IMR-90 (cell line): ENCODE measurements at regions of chr2 and their contacts with region 1.

Region 1: GRCh38 chr2:64330281-64331113 is 123.5 kb upstream of the LGALSL start:
- DNase-seq: peak; percentile 88
- ATAC-seq: peak; percentile 82
- H3K4me3 ChIP-seq: peak overlapping the region; percentile 43
- H3K27ac ChIP-seq: no peak overlapping the region
- H3K4me1 ChIP-seq: peaks cover 6% of the 10 kb centered on the region; the same call in 1 of the 2 replicates
- H3K27me3 ChIP-seq: peaks cover 11% of the 10 kb centered on the region
- CTCF ChIP-seq: peak; percentile 93
- POLR2A ChIP-seq: no peak
- RAD21 ChIP-seq: peak; percentile 92

Region 2: GRCh38 chr2:63983986-63984605 is 346.4 kb before region 1 on chr2:
- CTCF ChIA-PET with region 1: no interaction called
- POLR2A ChIA-PET with region 1: no interaction called
- dilution Hi-C with region 1: no loop called
- in situ Hi-C with region 1: no loop called
- intact Hi-C with region 1: no loop called
- DNase-seq: peak; percentile 9
- ATAC-seq: no peak
- H3K4me3 ChIP-seq: no peak overlapping the region
- H3K27ac ChIP-seq: no peak overlapping the region
- H3K4me1 ChIP-seq: no peaks in the 10 kb centered on the region
- H3K27me3 ChIP-seq: no peaks in the 10 kb centered on the region
- CTCF ChIP-seq: no peak
- POLR2A ChIP-seq: no peak
- RAD21 ChIP-seq: no peak

Region 3: DNA sequence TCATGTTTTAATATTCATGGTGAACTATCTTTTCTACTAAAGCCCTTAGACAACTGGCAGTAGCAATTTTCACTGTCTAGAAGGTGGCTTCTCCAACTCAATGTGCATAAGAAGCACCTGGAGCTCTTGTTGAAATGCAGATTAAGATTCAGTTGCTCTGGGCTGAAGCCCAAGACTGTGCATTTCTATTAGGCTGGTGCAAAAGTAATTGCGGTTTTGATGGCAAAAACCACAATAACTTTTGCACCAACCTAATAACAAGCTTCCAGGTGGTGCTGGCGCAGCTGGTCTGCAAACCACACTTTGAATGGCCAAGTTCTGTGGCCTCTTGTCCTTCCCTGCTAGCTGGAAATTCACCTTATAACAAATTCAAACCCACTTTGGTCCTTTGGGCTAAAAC is 284.6 kb before region 1 on chr2:
- CTCF ChIA-PET with region 1: interaction called, 11 read pairs
- POLR2A ChIA-PET with region 1: no interaction called
- dilution Hi-C with region 1: no loop called
- in situ Hi-C with region 1: loop called (anchors 5 kb)
- intact Hi-C with region 1: loop called (anchors 1 kb)
- DNase-seq: no peak
- ATAC-seq: no peak
- H3K4me3 ChIP-seq: no peak overlapping the region
- H3K27ac ChIP-seq: no peak overlapping the region
- H3K4me1 ChIP-seq: no peaks in the 10 kb centered on the region
- H3K27me3 ChIP-seq: peaks cover 4% of the 10 kb centered on the region; the same call in 1 of the 2 replicates
- CTCF ChIP-seq: no peak
- POLR2A ChIP-seq: no peak
- RAD21 ChIP-seq: no peak

Region 4: DNA sequence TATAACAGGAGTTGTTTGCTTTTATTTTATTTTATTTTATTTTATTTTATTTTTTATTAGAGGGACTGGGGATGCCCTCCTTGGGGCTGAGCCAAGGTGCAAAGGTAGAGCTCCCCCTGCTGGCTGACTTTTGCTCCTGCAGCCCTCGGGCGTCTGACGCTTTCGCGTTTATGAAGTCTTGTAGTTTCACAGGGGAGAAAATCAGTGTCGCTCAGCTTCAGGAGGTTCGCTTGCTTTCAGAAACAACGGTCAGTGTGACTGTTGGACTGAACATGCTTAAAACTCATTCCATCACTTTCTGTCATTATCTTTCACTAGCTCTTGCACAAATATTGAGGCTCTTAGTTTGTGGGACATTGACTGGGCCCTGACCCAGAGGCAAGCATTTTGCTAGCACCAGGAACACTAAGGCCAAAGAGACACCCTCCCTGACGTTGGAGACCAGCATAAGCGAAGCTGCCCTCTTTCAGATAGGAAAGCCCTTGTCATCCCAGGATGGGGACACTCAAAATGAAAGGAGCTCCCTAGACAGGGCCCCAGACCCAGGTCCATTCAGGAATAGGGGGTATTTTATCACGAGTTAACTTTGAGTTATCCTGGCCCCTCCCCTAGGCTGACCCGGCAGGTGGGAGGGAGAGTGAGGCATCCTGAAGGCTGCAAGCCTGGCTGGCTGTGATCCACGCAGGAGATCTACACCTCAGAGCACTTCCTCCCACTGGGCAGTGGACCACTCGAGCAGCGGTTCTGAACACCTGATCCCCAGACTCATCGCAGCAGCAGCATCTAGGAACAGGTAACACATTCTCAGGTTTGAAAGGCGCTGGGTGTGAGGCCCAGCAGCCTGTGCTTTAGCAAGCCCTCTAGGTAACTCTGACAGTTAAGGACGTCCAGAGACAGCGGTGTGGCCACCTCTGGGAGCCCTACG is 157.8 kb after region 1 on chr2:
- CTCF ChIA-PET with region 1: interaction called, 36 read pairs
- POLR2A ChIA-PET with region 1: no interaction called
- dilution Hi-C with region 1: no loop called
- in situ Hi-C with region 1: loop called (anchors 5 kb)
- intact Hi-C with region 1: loop called (anchors 1 kb)
- DNase-seq: peak; percentile 42
- ATAC-seq: peak; percentile 87
- H3K4me3 ChIP-seq: no peak overlapping the region
- H3K27ac ChIP-seq: no peak overlapping the region
- H3K4me1 ChIP-seq: peaks cover 2% of the 10 kb centered on the region; the same call in 1 of the 2 replicates
- H3K27me3 ChIP-seq: peaks cover 49% of the 10 kb centered on the region
- CTCF ChIP-seq: peak; percentile 86
- POLR2A ChIP-seq: no peak
- RAD21 ChIP-seq: peak; percentile 73

Region 5: DNA sequence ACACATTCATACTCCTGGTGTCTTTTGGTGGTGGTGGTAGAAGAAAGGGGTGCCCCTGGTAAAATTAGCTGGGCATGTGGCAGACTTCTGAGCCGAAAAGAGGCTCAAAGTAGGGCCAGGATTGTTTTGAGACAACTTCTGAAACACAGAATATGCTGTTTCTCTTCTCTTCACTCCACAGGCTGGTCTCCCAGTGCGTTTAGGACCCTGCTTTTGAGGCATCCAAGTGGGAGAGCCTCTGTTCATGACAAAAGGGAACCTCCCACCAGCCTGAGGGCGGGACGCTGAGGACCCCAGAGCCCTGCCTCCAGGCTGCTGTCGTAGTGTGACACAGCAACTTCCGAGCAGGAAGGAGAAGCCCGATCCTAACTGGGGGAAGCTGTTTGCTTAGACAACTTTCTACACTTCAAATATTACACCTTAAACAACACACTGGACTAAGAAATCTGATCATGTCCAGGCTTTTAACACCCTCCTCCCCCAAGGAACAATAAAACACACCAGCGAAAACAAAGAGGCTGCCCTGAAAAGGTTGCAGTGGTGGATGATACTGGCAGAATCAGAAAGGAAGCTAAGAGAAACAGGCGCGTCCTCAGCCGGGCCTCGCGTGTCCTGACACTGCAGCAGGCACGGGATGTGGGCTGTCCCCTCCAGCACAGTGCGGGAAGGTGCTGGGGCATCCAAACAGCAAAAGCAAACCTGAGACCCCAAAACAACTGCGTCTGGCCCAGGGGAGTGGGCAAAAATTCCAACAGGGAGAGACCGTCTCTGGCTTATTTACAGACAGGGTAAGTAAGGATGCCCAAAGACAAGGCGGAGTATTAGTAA is 313.9 kb after region 1 on chr2:
- CTCF ChIA-PET with region 1: no interaction called
- POLR2A ChIA-PET with region 1: no interaction called
- dilution Hi-C with region 1: no loop called
- in situ Hi-C with region 1: no loop called
- intact Hi-C with region 1: loop called (anchors 2 kb)
- DNase-seq: peak; percentile 81
- ATAC-seq: peak; percentile 92
- H3K4me3 ChIP-seq: peak overlapping the region; percentile 40
- H3K27ac ChIP-seq: peak overlapping the region; percentile 84
- H3K4me1 ChIP-seq: peaks cover 15% of the 10 kb centered on the region
- H3K27me3 ChIP-seq: no peaks in the 10 kb centered on the region
- CTCF ChIP-seq: no peak
- POLR2A ChIP-seq: peak; percentile 70
- RAD21 ChIP-seq: 0 out of 2 replicates have a peak, but pooled peaks have one; percentile 1

Region 6: GRCh38 chr2:64873472-64873924 is 543.0 kb after region 1 on chr2:
- CTCF ChIA-PET with region 1: no interaction called
- POLR2A ChIA-PET with region 1: no interaction called
- dilution Hi-C with region 1: no loop called
- in situ Hi-C with region 1: loop called (anchors 10 kb)
- intact Hi-C with region 1: no loop called
- DNase-seq: peak; percentile 22
- ATAC-seq: peak; percentile 98
- H3K4me3 ChIP-seq: no peak overlapping the region
- H3K27ac ChIP-seq: no peak overlapping the region
- H3K4me1 ChIP-seq: peaks cover 5% of the 10 kb centered on the region
- H3K27me3 ChIP-seq: peaks cover 34% of the 10 kb centered on the region
- CTCF ChIP-seq: peak; percentile 93
- POLR2A ChIP-seq: 0 out of 2 replicates have a peak, but pooled peaks have one; percentile 33
- RAD21 ChIP-seq: peak; percentile 89

Region 7: GRCh38 chr2:65576861-65577601 is 1246.5 kb after region 1 on chr2:
- CTCF ChIA-PET with region 1: no interaction called
- POLR2A ChIA-PET with region 1: no interaction called
- dilution Hi-C with region 1: no loop called
- in situ Hi-C with region 1: no loop called
- intact Hi-C with region 1: loop called (anchors 5 kb)
- DNase-seq: peak; percentile 95
- ATAC-seq: peak; percentile 86
- H3K4me3 ChIP-seq: no peak overlapping the region
- H3K27ac ChIP-seq: peak overlapping the region; percentile 91
- H3K4me1 ChIP-seq: peaks cover 9% of the 10 kb centered on the region
- H3K27me3 ChIP-seq: no peaks in the 10 kb centered on the region
- CTCF ChIP-seq: no peak
- POLR2A ChIP-seq: no peak
- RAD21 ChIP-seq: no peak